ENCODE measurements at regions of chr2 and their contacts with region 1.

Region 1: DNA sequence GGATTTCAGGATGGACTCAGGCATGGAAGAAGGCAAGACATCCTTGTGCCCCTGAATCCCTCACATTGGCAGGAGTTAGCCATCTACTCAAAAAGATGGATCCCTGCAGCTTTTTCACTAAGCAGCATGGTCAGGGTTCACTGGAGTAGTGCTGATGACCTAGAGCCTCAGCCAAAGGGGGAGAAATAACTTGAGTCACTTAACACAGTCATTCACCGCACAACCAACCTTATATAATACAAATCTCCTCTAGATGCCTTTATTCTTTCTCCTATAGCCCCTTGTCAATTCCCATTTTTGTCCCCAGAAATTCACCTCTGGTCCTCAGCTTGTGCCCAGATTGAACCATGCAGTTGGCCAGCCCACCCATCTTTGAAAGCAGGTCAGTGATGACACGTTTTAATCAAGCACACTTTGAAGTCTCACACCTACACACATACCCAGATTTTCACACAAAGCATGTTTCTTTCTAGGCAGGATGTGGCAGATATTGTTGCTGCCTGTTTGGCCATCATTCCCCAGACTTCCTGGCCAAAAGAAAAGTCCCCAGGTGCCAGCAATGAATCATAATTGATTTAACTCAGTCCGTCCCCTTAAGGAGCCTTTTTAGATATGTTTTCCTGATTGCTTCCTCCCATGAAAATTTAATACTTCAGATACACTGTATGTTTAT is 84.2 kb downstream of the LBH start:
- DNase-seq: peak; percentile 61
- H3K4me3 Mint-ChIP-seq: no peak overlapping the region
- H3K27ac Mint-ChIP-seq: peak overlapping the region; percentile 77
- H3K4me1 Mint-ChIP-seq: peaks cover 36% of the 10 kb centered on the region
- H3K27me3 Mint-ChIP-seq: no peaks in the 10 kb centered on the region

Region 2: GRCh38 chr2:29700560-29700959 is 615.0 kb before region 1 on chr2:
- CTCF ChIA-PET with region 1: no interaction called
- intact Hi-C with region 1: no loop called
- DNase-seq: no peak
- H3K4me3 Mint-ChIP-seq: no peak overlapping the region
- H3K27ac Mint-ChIP-seq: no peak overlapping the region
- H3K4me1 Mint-ChIP-seq: no peaks in the 10 kb centered on the region
- H3K27me3 Mint-ChIP-seq: no peaks in the 10 kb centered on the region

Region 3: DNA sequence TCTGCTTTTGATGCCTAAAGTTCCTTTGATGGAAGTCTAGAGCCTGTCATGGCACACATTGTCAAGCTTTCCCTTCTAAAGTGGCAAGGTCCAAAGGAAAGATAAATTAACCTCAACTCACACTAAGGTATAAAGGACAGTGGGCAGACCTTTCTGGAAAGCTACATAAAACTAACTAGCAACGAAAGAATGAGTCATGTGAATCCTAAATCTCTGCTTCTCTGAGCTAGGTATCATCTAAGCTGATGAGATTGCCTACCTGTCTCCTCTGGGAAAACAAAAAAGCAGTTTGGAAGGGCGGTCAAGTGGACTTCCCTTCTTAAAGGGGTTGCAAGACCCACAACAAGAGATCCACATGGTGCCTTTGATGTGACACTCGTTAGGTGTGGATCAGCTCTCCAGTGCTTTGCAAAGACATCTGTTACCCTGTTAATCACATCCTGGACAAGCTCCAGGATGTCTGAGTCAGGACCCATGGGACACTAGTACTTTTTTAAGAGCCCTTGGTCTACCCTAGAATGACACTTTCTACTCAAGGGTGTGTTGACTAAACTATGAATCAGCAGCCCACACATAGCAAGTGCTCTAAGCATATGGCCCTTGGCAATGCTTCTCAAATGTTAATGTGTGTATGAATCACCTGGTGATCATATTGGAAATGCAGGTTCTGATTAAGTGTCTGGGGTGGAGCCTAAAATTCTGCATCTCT is 567.6 kb before region 1 on chr2:
- CTCF ChIA-PET with region 1: no interaction called
- intact Hi-C with region 1: no loop called
- DNase-seq: peak; percentile 9
- H3K4me3 Mint-ChIP-seq: no peak overlapping the region
- H3K27ac Mint-ChIP-seq: no peak overlapping the region
- H3K4me1 Mint-ChIP-seq: no peaks in the 10 kb centered on the region
- H3K27me3 Mint-ChIP-seq: peaks cover 7% of the 10 kb centered on the region

Region 4: DNA sequence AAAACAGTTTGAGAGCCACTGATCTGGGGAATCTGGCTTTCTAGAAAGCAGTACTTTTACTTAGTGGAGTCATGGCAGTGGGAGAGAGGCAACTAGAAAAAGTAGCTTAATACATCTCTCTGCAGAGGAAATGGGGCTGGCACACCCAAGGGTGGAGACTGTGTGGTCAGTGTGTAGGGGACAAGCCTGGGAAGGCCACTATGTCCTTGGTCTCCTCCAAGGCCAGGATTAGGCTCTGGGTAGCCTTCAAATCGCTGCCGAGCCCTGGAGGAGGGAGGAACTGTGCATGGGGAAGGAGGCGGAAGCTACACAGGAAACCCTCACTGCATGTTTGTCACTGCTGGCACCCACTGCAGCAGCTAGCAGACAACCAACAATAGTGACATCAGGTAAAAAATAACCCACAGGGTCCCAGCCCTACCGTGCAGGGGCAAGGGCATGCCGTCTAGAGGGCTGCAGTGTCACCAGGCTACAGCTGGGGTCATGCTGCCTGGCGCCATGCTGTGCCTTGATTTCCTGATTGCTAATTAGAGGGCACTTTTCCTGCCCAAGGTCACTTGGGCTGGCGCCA is 49.4 kb before region 1 on chr2:
- CTCF ChIA-PET with region 1: interaction called, 3 read pairs
- intact Hi-C with region 1: loop called (anchors 2 kb)
- DNase-seq: peak; percentile 73
- H3K4me3 Mint-ChIP-seq: peak overlapping the region; percentile 79
- H3K27ac Mint-ChIP-seq: peak overlapping the region; percentile 89
- H3K4me1 Mint-ChIP-seq: peaks cover 81% of the 10 kb centered on the region
- H3K27me3 Mint-ChIP-seq: no peaks in the 10 kb centered on the region

Region 5: GRCh38 chr2:30273261-30273861 is 42.2 kb before region 1 on chr2:
- CTCF ChIA-PET with region 1: no interaction called
- intact Hi-C with region 1: loop called (anchors 1 kb)
- DNase-seq: peak; percentile 60
- H3K4me3 Mint-ChIP-seq: no peak overlapping the region
- H3K27ac Mint-ChIP-seq: peak overlapping the region; percentile 68
- H3K4me1 Mint-ChIP-seq: peaks cover 78% of the 10 kb centered on the region
- H3K27me3 Mint-ChIP-seq: no peaks in the 10 kb centered on the region

Region 6: DNA sequence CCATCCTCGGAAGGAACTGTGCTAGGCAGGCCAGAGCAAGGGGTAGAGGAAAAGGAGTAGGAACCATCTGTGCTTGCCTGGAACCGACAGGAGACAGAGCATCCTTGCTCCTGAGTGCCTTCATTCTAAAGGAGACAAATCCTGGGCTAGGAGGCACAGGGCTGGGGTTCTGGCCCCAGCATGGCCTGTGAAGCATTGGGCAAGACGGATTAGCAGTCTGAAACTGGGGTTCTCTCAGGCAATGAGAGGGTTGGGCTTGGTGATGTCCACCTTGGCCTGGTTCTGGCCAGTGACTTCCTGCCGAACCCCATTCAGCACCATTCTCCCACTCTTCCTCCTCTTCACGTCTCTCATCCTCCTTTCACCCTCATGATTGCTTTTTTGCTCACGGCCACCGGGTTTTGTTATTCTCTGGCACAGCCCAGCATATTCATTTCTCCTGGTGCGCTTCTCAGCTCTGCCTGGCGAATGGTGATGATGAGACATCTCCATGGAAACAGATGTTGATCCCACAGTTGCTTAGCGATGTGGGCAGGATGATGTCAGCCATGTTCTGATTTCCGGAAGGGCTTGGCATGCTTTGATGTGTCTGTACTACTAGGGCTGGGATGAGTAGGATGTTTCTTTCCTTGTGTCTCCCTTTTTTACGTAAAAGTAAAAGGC is 364.0 kb after region 1 on chr2:
- CTCF ChIA-PET with region 1: no interaction called
- intact Hi-C with region 1: no loop called
- DNase-seq: no peak
- H3K4me3 Mint-ChIP-seq: no peak overlapping the region
- H3K27ac Mint-ChIP-seq: no peak overlapping the region
- H3K4me1 Mint-ChIP-seq: no peaks in the 10 kb centered on the region
- H3K27me3 Mint-ChIP-seq: no peaks in the 10 kb centered on the region